IMR-90 (cell line): ENCODE measurements at regions of chr10 and their contacts with region 1.

Region 1: GRCh38 chr10:6401562-6402348 is 178.3 kb downstream of the PRKCQ start:
- DNase-seq: peak; percentile 92
- ATAC-seq: peak; percentile 86
- H3K4me3 ChIP-seq: peak overlapping the region; percentile 3; the same call in 1 of the 2 replicates
- H3K27ac ChIP-seq: peak overlapping the region; percentile 46; the same call in 1 of the 2 replicates
- H3K4me1 ChIP-seq: peaks cover 19% of the 10 kb centered on the region
- H3K27me3 ChIP-seq: no peaks in the 10 kb centered on the region; the same call in 1 of the 2 replicates
- CTCF ChIP-seq: peak; percentile 83
- POLR2A ChIP-seq: peak; percentile 52; the same call in 1 of the 2 replicates
- RAD21 ChIP-seq: peak; percentile 91

Region 2: DNA sequence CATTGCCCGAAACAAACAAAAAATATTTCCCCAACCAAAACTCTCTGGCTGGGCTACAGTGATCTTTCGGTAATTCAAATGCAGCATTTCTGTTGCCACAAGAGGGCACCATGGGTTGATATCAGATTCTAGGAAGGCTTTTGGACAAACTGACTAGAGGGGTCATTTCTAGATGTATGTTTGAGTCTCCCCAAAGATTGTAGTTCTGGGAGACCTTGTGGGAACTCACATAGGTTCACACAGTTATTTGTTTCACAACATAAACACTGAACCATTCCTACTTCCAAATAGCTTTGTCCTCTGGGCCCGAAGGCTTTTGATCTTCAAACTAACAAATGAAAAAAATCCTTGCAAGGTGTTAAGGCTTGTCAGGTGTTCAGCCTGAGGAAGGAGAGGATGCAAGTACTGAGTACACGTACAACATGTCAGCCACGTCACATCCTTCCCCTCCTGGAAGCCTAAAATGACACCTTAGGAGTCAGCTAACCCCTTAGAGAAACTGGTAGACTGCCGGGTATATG is 387.5 kb before region 1 on chr10:
- CTCF ChIA-PET with region 1: interaction called, 6 read pairs
- POLR2A ChIA-PET with region 1: no interaction called
- dilution Hi-C with region 1: no loop called
- in situ Hi-C with region 1: no loop called
- intact Hi-C with region 1: loop called (anchors 1 kb)
- DNase-seq: peak; percentile 42
- ATAC-seq: peak; percentile 75
- H3K4me3 ChIP-seq: no peak overlapping the region
- H3K27ac ChIP-seq: no peak overlapping the region
- H3K4me1 ChIP-seq: peaks cover 4% of the 10 kb centered on the region
- H3K27me3 ChIP-seq: peaks cover 11% of the 10 kb centered on the region
- CTCF ChIP-seq: peak; percentile 68
- POLR2A ChIP-seq: no peak
- RAD21 ChIP-seq: peak; percentile 60

Region 3: DNA sequence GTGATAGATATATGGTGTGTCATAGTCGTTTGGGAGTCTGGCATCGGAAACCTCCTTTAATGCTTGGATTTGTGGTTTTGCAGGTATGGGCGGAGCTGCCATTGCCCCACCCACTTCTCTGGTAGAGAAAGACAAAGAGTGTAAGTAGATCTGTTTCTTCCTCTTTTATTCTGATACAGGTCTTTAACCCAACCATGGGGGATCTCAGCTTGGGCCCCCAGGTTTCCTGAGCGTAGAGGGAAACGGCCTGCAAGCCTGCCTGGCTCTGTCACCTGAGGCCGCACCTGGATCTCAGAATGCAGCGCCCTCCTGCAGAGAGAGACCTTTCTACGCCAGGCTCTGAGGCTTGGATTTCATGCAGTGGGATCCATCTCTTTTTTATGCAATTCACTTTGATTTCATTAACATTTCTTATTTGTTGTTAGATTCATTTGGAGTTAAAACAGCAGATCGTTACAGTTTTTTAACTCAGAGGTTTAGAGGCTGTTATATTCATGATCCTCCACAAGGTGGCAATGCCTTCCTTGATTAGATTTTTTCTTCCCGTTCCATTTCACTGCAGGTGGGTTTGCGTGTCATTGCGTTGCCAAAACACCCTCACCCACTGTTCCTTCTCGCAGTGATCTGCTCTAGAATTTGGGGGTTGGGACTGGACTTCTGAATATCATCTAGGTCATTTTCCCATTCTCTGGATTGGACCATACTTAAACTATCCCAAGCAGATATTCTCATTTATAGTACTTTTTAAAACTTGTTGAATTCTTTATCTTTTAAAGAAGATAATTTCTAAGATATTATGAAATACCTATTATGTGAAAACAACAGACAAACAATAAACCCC is 292.9 kb before region 1 on chr10:
- CTCF ChIA-PET with region 1: interaction called, 28 read pairs
- POLR2A ChIA-PET with region 1: no interaction called
- dilution Hi-C with region 1: no loop called
- in situ Hi-C with region 1: loop called (anchors 5 kb)
- intact Hi-C with region 1: loop called (anchors 1 kb)
- DNase-seq: peak; percentile 61
- ATAC-seq: peak; percentile 53
- H3K4me3 ChIP-seq: no peak overlapping the region
- H3K27ac ChIP-seq: no peak overlapping the region
- H3K4me1 ChIP-seq: peaks cover 4% of the 10 kb centered on the region
- H3K27me3 ChIP-seq: no peaks in the 10 kb centered on the region
- CTCF ChIP-seq: peak; percentile 79
- POLR2A ChIP-seq: no peak
- RAD21 ChIP-seq: peak; percentile 86

Region 4: DNA sequence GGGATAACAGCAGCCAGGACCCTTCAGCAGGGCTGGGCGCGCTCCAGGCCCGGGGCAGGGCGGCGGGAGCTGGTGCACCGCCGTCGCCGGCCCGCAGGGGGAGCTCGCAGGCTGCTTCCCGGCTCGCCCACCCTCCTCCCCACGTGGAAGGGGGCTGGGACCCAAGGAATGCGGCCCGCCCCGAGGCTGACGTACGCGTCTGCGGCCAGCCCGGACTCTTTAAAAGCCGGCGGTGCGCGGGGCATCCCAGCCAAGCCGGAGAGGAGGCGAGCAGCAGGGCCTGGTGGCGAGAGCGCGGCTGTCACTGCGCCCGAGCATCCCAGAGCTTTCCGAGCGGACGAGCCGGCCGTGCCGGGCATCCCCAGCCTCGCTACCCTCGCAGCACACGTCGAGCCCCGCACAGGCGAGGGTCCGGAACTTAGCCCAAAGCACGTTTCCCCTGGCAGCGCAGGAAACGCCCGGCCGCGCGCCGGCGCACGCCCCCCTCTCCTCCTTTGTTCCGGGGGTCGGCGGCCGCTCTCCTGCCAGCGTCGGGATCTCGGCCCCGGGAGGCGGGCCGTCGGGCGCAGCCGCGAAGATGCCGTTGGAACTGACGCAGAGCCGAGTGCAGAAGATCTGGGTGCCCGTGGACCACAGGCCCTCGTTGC is 198.9 kb before region 1 on chr10 and contains the start of gene PFKFB3:
- CTCF ChIA-PET with region 1: interaction called, 42 read pairs
- POLR2A ChIA-PET with region 1: interaction called, 19 read pairs
- dilution Hi-C with region 1: no loop called
- in situ Hi-C with region 1: no loop called
- intact Hi-C with region 1: loop called (anchors 1 kb)
- DNase-seq: peak; percentile 92
- ATAC-seq: peak; percentile 80
- H3K4me3 ChIP-seq: peak within 1 kb of the TSS; percentile 83
- H3K27ac ChIP-seq: peak within 1 kb of the TSS; percentile 91
- H3K4me1 ChIP-seq: peaks cover 17% of the 10 kb centered on the region
- H3K27me3 ChIP-seq: no peaks in the 10 kb centered on the region
- CTCF ChIP-seq: peak; percentile 97
- POLR2A ChIP-seq: peak; percentile 100
- RAD21 ChIP-seq: peak; percentile 75
- total RNA-seq, gene PFKFB3: 26.9 and 34.1 TPM in 2 replicates

Region 5: GRCh38 chr10:6218692-6219493 is 182.9 kb before region 1 on chr10:
- CTCF ChIA-PET with region 1: interaction called, 10 read pairs
- POLR2A ChIA-PET with region 1: no interaction called
- dilution Hi-C with region 1: no loop called
- in situ Hi-C with region 1: loop called (anchors 10 kb)
- intact Hi-C with region 1: no loop called
- DNase-seq: peak; percentile 55
- ATAC-seq: peak; percentile 23; the same call in 1 of the 2 replicates
- H3K4me3 ChIP-seq: no peak overlapping the region
- H3K27ac ChIP-seq: peak overlapping the region; percentile 10; the same call in 1 of the 2 replicates
- H3K4me1 ChIP-seq: peaks cover 4% of the 10 kb centered on the region
- H3K27me3 ChIP-seq: no peaks in the 10 kb centered on the region
- CTCF ChIP-seq: no peak
- POLR2A ChIP-seq: no peak
- RAD21 ChIP-seq: no peak

Region 6: DNA sequence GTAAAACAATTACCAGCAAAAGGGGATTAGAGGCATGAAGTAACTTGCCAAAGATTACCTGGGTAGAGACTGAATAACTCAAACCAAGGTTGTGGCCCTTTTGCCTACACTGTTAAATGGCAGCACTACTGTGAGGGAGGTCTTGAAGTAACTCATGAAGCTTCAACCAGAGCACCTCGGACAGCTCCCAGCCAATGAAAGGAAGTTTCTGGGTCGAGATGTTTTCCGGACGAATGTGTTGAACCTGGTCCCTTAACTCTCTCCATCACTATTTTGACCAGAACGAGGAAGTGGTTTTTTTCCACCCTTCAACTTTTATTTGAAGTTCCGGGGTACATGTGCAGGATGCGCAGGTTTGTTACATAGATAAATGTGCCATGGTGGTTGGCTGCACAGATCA is 312.0 kb after region 1 on chr10:
- CTCF ChIA-PET with region 1: no interaction called
- POLR2A ChIA-PET with region 1: no interaction called
- dilution Hi-C with region 1: no loop called
- in situ Hi-C with region 1: no loop called
- intact Hi-C with region 1: no loop called
- DNase-seq: peak; percentile 25
- ATAC-seq: peak; percentile 56
- H3K4me3 ChIP-seq: no peak overlapping the region
- H3K27ac ChIP-seq: no peak overlapping the region
- H3K4me1 ChIP-seq: no peaks in the 10 kb centered on the region; the same call in 1 of the 2 replicates
- H3K27me3 ChIP-seq: peaks cover 7% of the 10 kb centered on the region
- CTCF ChIP-seq: no peak
- POLR2A ChIP-seq: no peak
- RAD21 ChIP-seq: no peak

Region 7: DNA sequence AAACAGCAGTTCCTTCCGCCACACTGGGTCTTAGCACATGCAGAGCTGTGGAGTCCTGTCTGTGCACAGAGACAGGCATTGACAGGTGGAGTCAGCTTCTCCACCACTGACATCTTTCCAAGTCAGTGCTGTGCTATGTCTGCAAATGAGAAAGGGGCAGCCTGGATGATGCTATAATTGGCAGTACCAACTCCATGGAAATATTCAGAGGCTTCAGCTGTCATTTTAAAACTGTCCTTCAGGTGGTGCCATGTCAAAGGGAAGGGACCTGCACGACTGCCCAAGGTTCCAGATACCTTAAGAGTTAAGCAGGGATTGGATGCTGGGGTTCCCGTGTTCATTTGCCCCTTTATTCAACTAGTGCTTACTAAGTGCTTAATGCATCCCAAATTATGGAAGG is 436.4 kb after region 1 on chr10:
- CTCF ChIA-PET with region 1: no interaction called
- POLR2A ChIA-PET with region 1: no interaction called
- dilution Hi-C with region 1: no loop called
- in situ Hi-C with region 1: no loop called
- intact Hi-C with region 1: no loop called
- DNase-seq: no peak
- ATAC-seq: no peak
- H3K4me3 ChIP-seq: no peak overlapping the region
- H3K27ac ChIP-seq: no peak overlapping the region
- H3K4me1 ChIP-seq: no peaks in the 10 kb centered on the region
- H3K27me3 ChIP-seq: no peaks in the 10 kb centered on the region
- CTCF ChIP-seq: no peak
- POLR2A ChIP-seq: no peak
- RAD21 ChIP-seq: no peak